ENCODE measurements at regions of chr4 and their contacts with region 1.

Region 1: DNA sequence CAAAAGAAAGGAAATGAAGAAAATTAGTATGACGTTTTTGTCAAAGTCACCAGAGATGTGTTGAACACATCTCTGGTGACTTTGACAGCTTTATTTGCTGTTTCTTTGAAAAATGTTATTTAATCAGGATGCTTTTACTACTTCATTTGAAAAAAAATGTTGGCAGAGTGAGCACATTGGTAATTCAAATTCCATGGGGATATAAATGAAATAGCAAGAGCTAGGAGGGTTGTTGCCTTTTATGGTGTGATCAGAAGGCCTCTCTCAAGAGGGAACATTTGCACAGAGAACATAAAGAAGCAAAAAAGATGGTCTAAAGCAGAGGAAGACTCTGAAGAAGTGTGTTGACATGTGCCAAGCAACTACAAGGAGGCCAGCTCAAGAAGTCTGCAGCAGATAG is 46.6 kb upstream of the CXCL8 start:
- DNase-seq: no peak

Region 2: GRCh38 chr4:73668782-73669201 is 25.0 kb before region 1 on chr4:
- CTCF ChIA-PET with region 1: no interaction called
- POLR2A ChIA-PET with region 1: no interaction called
- DNase-seq: no peak

Region 3: GRCh38 chr4:73679836-73680235 is 14.0 kb before region 1 on chr4:
- CTCF ChIA-PET with region 1: no interaction called
- POLR2A ChIA-PET with region 1: no interaction called
- DNase-seq: no peak

Region 4: GRCh38 chr4:73751166-73751565 is 57.4 kb after region 1 on chr4:
- CTCF ChIA-PET with region 1: no interaction called
- POLR2A ChIA-PET with region 1: no interaction called
- DNase-seq: no peak

Region 5: GRCh38 chr4:75087865-75088264 is 1394.1 kb after region 1 on chr4:
- CTCF ChIA-PET with region 1: interaction called, 10 read pairs
- POLR2A ChIA-PET with region 1: no interaction called
- DNase-seq: no peak